ENCODE measurements at regions of chr13 and their contacts with region 1.

Region 1: GRCh38 chr13:100235311-100235901 is 146.5 kb downstream of the PCCA start:
- DNase-seq: no peak
- ATAC-seq: no peak

Region 2: GRCh38 chr13:99916366-99917103 is 318.9 kb before region 1 on chr13:
- intact Hi-C with region 1: loop called (anchors 5 kb)
- DNase-seq: no peak
- ATAC-seq: peak; percentile 71

Region 3: GRCh38 chr13:100075700-100076587 is 159.5 kb before region 1 on chr13:
- intact Hi-C with region 1: no loop called
- DNase-seq: no peak
- ATAC-seq: no peak

Region 4: DNA sequence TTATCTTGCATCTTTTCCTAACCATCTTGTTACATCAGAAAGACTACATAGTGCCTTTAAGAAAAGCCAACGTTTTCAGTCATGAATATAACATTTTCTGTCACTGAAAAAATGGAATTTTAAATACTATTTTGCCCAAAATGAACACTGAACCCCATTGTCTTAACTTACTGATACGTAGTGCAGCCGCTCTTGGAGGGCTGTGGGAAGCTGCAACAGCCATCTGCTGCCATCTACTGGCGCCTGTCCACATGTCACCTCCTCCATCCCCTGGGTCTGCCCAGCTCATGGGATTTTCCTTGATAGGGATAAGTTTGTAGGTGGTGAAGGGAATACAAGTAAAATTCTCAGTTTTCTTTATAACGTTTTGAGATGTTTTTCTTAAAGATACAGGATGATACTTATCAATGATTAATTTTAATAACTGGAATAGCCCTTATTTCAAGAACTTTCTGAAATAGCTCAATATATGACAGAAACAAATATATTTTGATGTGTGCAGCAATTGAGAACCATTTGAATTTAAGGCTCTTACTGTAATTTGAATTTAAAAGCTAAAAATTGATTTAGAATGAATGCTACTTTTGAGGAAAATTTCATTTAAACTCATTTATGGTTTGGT is 279.5 kb after region 1 on chr13:
- intact Hi-C with region 1: loop called (anchors 10 kb)
- DNase-seq: peak; percentile 80
- ATAC-seq: peak; percentile 91